Right cardiac atrium (tissue), 5 donors: ENCODE measurements at regions of chr2 and their contacts with region 1.

Region 1: DNA sequence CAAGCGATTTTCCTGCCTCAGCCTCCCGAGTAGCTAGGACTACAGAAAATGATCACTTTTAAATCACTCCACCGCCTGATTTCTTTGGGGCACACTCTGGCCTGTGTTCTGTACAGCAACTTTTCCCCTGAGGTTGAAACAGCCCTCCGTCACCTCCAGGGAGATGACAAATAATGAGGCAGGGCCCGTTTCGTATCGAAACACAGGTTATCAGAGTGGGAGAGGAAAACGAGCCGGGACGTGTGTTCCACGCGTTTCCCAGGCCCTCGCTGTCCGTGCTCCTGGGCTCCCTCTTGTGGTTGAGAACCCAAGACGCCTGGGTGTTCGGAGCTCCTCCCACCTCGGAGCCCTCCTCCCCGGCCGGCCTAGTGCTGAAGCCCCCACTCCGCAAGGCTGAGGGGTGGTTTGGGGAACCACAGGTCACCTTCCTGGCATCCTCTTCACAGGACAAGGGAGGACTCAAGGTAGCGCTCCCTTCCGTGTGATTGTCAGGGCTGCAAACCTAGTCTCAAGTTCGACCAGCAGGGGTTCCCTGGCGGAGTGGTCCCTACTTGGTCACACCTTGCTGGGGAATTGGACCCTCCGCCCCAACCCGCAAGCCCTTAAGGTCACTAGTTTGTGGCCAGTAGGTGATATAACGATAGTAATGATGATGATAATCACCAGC is 12.8 kb downstream of the ATP6V1B1 start:
- DNase-seq: peak; percentile 80 to 93 (median 90)
- ATAC-seq: peak; percentile 96
- H3K4me3 ChIP-seq: peak overlapping the region; percentile 24
- H3K27ac ChIP-seq: no peak overlapping the region
- H3K4me1 ChIP-seq: no peaks in the 10 kb centered on the region
- H3K27me3 ChIP-seq: no peaks in the 10 kb centered on the region

Region 2: GRCh38 chr2:70789304-70790135 is 158.9 kb before region 1 on chr2:
- intact Hi-C with region 1: loop called in 2 of 4 experiments (anchors 5 kb)
- DNase-seq: peak; percentile 60 to 82 (median 76)
- ATAC-seq: peak; percentile 75 to 89
- H3K4me3 ChIP-seq: peak overlapping the region; percentile 38
- H3K27ac ChIP-seq: no peak overlapping the region
- H3K4me1 ChIP-seq: no peaks in the 10 kb centered on the region
- H3K27me3 ChIP-seq: peaks cover 3% of the 10 kb centered on the region

Region 3: GRCh38 chr2:70861777-70862625 is 86.5 kb before region 1 on chr2:
- intact Hi-C with region 1: loop called in 2 of 4 experiments (anchors 5 to 10 kb)
- DNase-seq: peak; percentile 76 to 92 (median 90)
- ATAC-seq: peak; percentile 88 to 91
- H3K4me3 ChIP-seq: no peak overlapping the region
- H3K27ac ChIP-seq: no peak overlapping the region
- H3K4me1 ChIP-seq: no peaks in the 10 kb centered on the region
- H3K27me3 ChIP-seq: peaks cover 3% of the 10 kb centered on the region

Region 4: DNA sequence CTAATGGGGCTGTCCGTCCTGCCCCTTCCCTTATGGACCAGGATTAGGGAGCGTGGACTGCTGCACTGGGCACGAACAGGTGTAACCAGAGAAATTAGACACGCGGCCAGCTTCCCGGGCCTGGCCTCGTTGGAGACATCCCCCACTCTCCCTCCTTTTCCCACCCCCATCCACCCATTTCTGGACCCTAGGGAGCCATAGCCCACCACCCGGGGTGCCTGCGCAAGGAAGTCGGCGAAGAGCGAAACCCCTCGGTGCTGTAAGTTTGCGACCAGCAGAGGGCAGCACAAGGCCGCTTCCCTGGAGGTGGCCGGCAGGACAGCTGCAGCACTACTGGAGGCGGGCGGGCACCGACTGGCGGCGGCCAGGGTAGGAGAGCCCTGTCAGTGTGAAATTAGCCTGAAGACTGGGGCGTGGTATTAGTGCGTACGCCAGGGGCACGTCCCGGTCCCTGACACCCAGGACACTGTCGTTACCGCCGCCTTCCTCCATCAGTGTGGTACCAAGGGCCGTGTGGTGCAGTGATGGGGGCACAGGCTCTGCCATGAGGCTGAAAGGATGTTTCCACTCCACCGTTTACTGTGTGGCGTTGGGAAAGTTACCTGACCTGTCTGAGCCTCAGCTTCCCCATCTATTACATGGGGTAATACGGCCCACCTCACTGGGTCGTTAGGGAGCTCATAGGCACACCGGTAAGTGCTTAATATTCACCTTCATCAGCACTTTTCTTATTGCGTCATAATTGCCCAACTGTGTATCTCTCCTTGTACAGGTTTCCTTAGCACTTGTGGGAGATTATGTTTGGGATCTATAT is 76.9 kb before region 1 on chr2:
- intact Hi-C with region 1: loop called in 3 of 4 experiments (anchors 2 to 10 kb)
- DNase-seq: peak; percentile 89 to 95 (median 95)
- ATAC-seq: peak; percentile 94 to 95
- H3K4me3 ChIP-seq: no peak overlapping the region
- H3K27ac ChIP-seq: no peak overlapping the region
- H3K4me1 ChIP-seq: no peaks in the 10 kb centered on the region
- H3K27me3 ChIP-seq: no peaks in the 10 kb centered on the region